ENCODE measurements at regions of chr10 and their contacts with region 1.

Region 1: DNA sequence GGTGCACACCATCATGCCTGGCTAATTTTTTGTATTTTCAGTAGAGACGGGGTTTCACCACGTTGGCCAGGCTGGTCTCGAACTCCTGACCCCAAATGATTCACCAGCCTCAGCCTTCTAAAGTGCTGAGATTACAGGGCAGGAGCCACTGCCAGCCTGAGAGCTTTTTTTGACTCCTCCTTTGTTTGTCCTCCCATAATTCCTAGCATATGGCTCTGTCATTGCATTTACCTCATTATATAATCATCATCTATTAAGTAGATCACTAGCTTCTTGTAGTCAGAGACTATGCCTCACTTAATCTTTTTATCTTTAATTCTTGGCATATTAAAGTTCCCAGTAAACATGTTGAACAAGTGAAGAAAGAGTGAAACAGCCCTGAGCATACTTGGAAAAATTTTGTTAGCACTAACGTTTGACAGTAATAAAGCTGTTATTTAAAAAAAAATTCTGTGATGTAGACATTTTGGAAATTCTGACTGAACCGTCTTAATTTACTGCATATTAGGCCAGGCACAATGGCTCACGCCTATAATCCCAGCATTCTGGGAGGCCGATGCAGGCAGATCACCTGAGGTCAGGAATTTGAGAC is 82.0 kb downstream of the CPEB3 start:
- DNase-seq: no peak
- ATAC-seq: no peak
- H3K4me3 ChIP-seq: no peak overlapping the region
- H3K27ac ChIP-seq: no peak overlapping the region
- H3K4me1 ChIP-seq: peaks cover 19% of the 10 kb centered on the region
- H3K27me3 ChIP-seq: no peaks in the 10 kb centered on the region
- CTCF ChIP-seq: no peak
- EP300 ChIP-seq: no peak
- POLR2A ChIP-seq: no peak
- RAD21 ChIP-seq: no peak

Region 2: GRCh38 chr10:91944880-91945630 is 263.8 kb before region 1 on chr10:
- CTCF ChIA-PET with region 1: no interaction called
- POLR2A ChIA-PET with region 1: no interaction called
- RAD21 ChIA-PET with region 1: no interaction called
- SMC1A ChIA-PET with region 1: no interaction called
- in situ Hi-C with region 1: no loop called
- intact Hi-C with region 1: no loop called
- DNase-seq: peak; percentile 24
- ATAC-seq: peak; percentile 95
- H3K4me3 ChIP-seq: no peak overlapping the region
- H3K27ac ChIP-seq: no peak overlapping the region
- H3K4me1 ChIP-seq: no peaks in the 10 kb centered on the region; the same call in 1 of the 2 replicates
- H3K27me3 ChIP-seq: no peaks in the 10 kb centered on the region
- CTCF ChIP-seq: no peak
- EP300 ChIP-seq: 0 out of 4 replicates have a peak, but pooled peaks of 1 of the 2 experiments have one; percentile 29
- POLR2A ChIP-seq: no peak
- RAD21 ChIP-seq: no peak

Region 3: DNA sequence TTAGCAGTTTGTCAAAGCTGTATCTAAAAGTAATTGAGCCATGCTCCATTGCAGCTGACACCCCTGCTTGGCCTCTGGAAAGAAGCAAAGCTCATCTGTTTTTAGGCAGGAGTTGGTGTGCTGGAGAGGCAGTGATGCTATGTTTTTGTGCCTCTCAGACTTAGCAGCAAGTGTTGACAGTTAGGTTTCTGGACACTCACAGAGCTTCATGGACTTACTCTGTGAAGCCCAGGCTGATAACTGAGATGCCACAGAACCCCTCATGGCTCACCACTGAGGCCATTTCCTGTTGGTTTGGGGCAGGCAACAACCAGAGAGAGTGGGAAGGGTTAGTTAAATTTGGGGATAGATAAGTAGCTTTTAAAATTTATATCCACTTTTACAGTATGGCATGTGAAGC is 225.4 kb before region 1 on chr10:
- CTCF ChIA-PET with region 1: no interaction called
- POLR2A ChIA-PET with region 1: no interaction called
- RAD21 ChIA-PET with region 1: no interaction called
- SMC1A ChIA-PET with region 1: no interaction called
- in situ Hi-C with region 1: no loop called
- intact Hi-C with region 1: no loop called
- DNase-seq: no peak
- ATAC-seq: no peak
- H3K4me3 ChIP-seq: no peak overlapping the region
- H3K27ac ChIP-seq: no peak overlapping the region
- H3K4me1 ChIP-seq: no peaks in the 10 kb centered on the region; the same call in 1 of the 2 replicates
- H3K27me3 ChIP-seq: no peaks in the 10 kb centered on the region
- CTCF ChIP-seq: no peak
- EP300 ChIP-seq: no peak
- POLR2A ChIP-seq: no peak
- RAD21 ChIP-seq: no peak

Region 4: GRCh38 chr10:92142949-92143348 is 65.9 kb before region 1 on chr10:
- CTCF ChIA-PET with region 1: no interaction called
- POLR2A ChIA-PET with region 1: interaction called, 3 read pairs
- RAD21 ChIA-PET with region 1: interaction called, 4 read pairs
- SMC1A ChIA-PET with region 1: interaction called, 7 read pairs
- in situ Hi-C with region 1: no loop called
- intact Hi-C with region 1: loop called (anchors 1 kb)
- DNase-seq: peak; percentile 43
- ATAC-seq: peak; percentile 79
- H3K4me3 ChIP-seq: peak overlapping the region; percentile 39
- H3K27ac ChIP-seq: peak overlapping the region; percentile 76
- H3K4me1 ChIP-seq: peaks cover 15% of the 10 kb centered on the region
- H3K27me3 ChIP-seq: no peaks in the 10 kb centered on the region
- CTCF ChIP-seq: no peak
- EP300 ChIP-seq: peak; percentile 67 to 79; a peak in 2 of 4 replicates
- POLR2A ChIP-seq: no peak
- RAD21 ChIP-seq: no peak